WTC11 (cell line): ENCODE measurements at regions of chr20 and their contacts with region 1.

Region 1: DNA sequence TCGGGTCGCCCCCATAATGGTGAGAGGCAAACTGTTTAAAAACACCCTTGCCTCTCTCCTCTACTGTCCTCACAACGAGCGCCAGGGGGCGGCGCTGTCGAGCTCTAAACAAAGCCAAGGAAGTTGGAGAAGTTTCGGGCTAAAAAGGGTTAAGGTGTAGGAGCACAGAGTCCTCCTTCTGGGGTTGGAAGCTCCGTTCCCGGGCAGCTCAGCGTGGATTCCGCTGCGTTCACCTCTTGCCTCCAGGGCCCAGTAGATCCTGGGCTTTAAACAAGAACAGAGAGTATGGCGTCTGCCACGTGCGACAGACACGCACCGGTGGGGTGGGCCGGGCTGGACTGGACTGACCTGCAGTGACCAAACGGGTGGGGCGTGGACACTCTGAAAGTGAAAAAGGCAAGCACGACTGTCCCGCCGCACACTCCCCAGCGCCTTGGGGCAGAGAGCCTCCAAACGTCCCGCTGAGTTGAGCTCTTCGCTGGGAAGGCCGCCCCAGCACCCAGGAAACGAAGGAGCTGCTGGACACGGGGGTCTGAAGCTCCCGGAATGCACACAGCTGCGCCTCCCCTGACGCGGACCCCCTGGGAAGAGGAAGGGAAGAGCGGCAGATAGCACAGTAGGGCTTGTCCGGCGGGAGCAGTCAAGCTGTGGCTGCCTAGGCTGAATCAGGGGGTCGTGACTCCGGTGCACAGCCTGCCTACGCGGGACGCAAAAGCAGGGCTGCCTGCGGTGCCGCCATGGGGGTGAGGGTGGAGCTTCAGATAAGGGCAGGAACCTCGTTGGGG is 1.6 kb upstream of the THBD start:
- DNase-seq: peak; percentile 94
- ATAC-seq: peak; percentile 64
- H3K4me3 Mint-ChIP-seq: peak overlapping the region; percentile 89
- H3K27ac Mint-ChIP-seq: no peak overlapping the region; the same call in 1 of the 2 replicates
- H3K4me1 Mint-ChIP-seq: peaks cover 17% of the 10 kb centered on the region
- H3K27me3 Mint-ChIP-seq: peaks cover 75% of the 10 kb centered on the region
- CTCF ChIP-seq: peak; percentile 89

Region 2: GRCh38 chr20:22974353-22974752 is 76.7 kb before region 1 on chr20:
- CTCF ChIA-PET with region 1: interaction called, 11 read pairs
- POLR2A ChIA-PET with region 1: no interaction called
- DNase-seq: peak; percentile 41
- ATAC-seq: peak; percentile 79
- H3K4me3 Mint-ChIP-seq: no peak overlapping the region
- H3K27ac Mint-ChIP-seq: no peak overlapping the region
- H3K4me1 Mint-ChIP-seq: peaks cover 15% of the 10 kb centered on the region
- H3K27me3 Mint-ChIP-seq: peaks cover 9% of the 10 kb centered on the region
- CTCF ChIP-seq: peak; percentile 47

Region 3: GRCh38 chr20:23061734-23062561 is 10.9 kb after region 1 on chr20:
- CTCF ChIA-PET with region 1: interaction called, 103 read pairs
- POLR2A ChIA-PET with region 1: interaction called, 3 read pairs
- DNase-seq: peak; percentile 70
- ATAC-seq: peak; percentile 95
- H3K4me3 Mint-ChIP-seq: no peak overlapping the region
- H3K27ac Mint-ChIP-seq: peak overlapping the region; percentile 38
- H3K4me1 Mint-ChIP-seq: peaks cover 32% of the 10 kb centered on the region
- H3K27me3 Mint-ChIP-seq: no peaks in the 10 kb centered on the region
- CTCF ChIP-seq: 0 out of 2 replicates have a peak, but pooled peaks have one; percentile 14

Region 4: DNA sequence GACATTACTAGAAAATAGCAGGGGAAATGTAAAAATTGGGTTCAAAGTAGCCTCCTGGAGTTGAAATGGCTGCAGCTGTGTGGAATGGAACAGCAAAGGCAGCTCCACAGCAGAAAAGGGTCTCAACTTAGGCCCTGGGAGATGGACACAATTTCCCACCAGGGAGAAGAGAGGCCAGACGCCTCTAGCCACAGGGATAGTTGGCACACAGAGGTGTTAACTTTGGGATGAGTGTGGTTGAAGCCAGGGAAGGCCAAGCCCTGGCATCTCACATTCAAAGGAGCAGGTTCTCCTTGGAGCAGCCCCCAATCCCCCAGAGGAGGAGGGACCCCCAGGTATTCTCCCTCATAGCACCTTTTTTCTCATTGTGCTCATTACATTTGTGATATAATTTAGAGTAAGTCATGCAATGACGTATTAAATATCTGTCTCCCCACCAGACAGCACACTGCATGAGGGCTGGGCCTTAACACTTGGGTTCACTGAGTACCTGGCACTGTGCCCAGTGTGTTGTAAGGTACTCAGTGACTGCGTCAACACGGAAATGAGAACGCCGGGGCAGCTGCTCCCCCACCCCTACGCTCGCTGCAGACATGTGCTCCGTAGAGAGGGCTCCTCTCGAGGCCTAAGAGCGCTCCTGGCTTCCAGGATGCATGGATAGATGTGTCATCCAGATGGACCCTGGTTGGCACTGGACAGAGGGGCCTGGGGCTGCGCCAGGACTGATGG is 111.1 kb after region 1 on chr20:
- CTCF ChIA-PET with region 1: interaction called, 31 read pairs
- POLR2A ChIA-PET with region 1: no interaction called
- DNase-seq: no peak
- ATAC-seq: no peak
- H3K4me3 Mint-ChIP-seq: no peak overlapping the region
- H3K27ac Mint-ChIP-seq: no peak overlapping the region
- H3K4me1 Mint-ChIP-seq: peaks cover 23% of the 10 kb centered on the region
- H3K27me3 Mint-ChIP-seq: no peaks in the 10 kb centered on the region
- CTCF ChIP-seq: no peak

Region 5: GRCh38 chr20:23225407-23226072 is 174.5 kb after region 1 on chr20:
- CTCF ChIA-PET with region 1: interaction called, 10 read pairs
- POLR2A ChIA-PET with region 1: no interaction called
- DNase-seq: no peak
- ATAC-seq: no peak
- H3K4me3 Mint-ChIP-seq: no peak overlapping the region
- H3K27ac Mint-ChIP-seq: no peak overlapping the region
- H3K4me1 Mint-ChIP-seq: no peaks in the 10 kb centered on the region
- H3K27me3 Mint-ChIP-seq: peaks cover 10% of the 10 kb centered on the region
- CTCF ChIP-seq: no peak

Region 6: GRCh38 chr20:23245553-23246181 is 194.6 kb after region 1 on chr20:
- CTCF ChIA-PET with region 1: interaction called, 24 read pairs
- POLR2A ChIA-PET with region 1: no interaction called
- DNase-seq: peak; percentile 68
- ATAC-seq: peak; percentile 95
- H3K4me3 Mint-ChIP-seq: no peak overlapping the region
- H3K27ac Mint-ChIP-seq: no peak overlapping the region
- H3K4me1 Mint-ChIP-seq: no peaks in the 10 kb centered on the region
- H3K27me3 Mint-ChIP-seq: no peaks in the 10 kb centered on the region; the same call in 1 of the 2 replicates
- CTCF ChIP-seq: 0 out of 2 replicates have a peak, but pooled peaks have one; percentile 14

Region 7: GRCh38 chr20:23270382-23270911 is 219.4 kb after region 1 on chr20:
- CTCF ChIA-PET with region 1: no interaction called
- POLR2A ChIA-PET with region 1: no interaction called
- DNase-seq: no peak
- ATAC-seq: no peak
- H3K4me3 Mint-ChIP-seq: no peak overlapping the region
- H3K27ac Mint-ChIP-seq: no peak overlapping the region
- H3K4me1 Mint-ChIP-seq: no peaks in the 10 kb centered on the region
- H3K27me3 Mint-ChIP-seq: peaks cover 6% of the 10 kb centered on the region
- CTCF ChIP-seq: no peak

Region 8: DNA sequence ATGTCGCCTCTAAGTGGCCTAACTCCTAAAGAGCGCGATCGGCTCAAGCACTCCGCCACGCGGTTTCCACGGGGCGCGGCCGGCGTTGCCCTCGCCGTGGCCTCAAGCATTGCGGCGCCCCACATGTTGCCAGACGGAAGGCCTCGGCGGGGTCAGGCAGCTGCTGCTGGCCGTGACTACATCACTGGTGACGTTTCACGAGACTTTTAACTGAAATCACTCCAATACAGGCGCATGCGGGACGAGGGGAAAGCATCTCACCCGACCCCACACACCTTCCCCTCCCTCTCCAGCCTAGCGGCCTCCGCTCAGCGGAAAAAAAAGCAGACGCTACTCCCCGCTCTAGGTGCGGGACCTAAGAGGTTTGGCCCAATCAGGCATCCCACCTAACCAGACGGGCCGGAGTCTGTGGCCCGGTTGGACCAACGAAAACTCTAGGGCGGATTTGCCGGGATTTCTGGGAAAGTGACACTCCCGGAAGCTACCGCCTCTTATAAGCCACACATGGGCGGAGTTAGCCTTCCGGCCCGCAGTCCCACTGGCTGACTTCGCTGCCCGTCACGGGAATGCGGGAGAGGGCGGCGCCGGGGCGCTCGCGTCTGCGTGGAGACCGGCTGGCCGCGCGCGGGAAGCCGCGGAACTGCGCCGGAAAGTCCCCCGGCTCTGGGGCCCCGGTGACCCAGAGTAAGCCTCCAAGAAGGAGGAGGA is 299.3 kb after region 1 on chr20 and contains the start of gene NXT1:
- CTCF ChIA-PET with region 1: interaction called, 20 read pairs
- POLR2A ChIA-PET with region 1: no interaction called
- DNase-seq: peak; percentile 94
- ATAC-seq: peak; percentile 93
- H3K4me3 Mint-ChIP-seq: peak within 1 kb of the TSS; percentile 97
- H3K27ac Mint-ChIP-seq: peak within 1 kb of the TSS; percentile 100
- H3K4me1 Mint-ChIP-seq: peaks cover 34% of the 10 kb centered on the region
- H3K27me3 Mint-ChIP-seq: no peaks in the 10 kb centered on the region; the same call in none of the 2 replicates
- CTCF ChIP-seq: no peak
- total RNA-seq, gene NXT1: 18.5 to 19.5 TPM (median 18.8 TPM) in 3 replicates